HepG2 (cell line): ENCODE measurements at regions of chr1 and their contacts with region 1.

Region 1: GRCh38 chr1:178335426-178335825 is 161.3 kb downstream of the CLEC20A start:
- DNase-seq: no peak
- ATAC-seq: no peak
- H3K4me3 ChIP-seq: no peak overlapping the region
- H3K27ac ChIP-seq: no peak overlapping the region
- H3K4me1 ChIP-seq: no peaks in the 10 kb centered on the region
- H3K27me3 ChIP-seq: no peaks in the 10 kb centered on the region
- CTCF ChIP-seq: no peak
- EP300 ChIP-seq: no peak
- POLR2A ChIP-seq: no peak
- RAD21 ChIP-seq: no peak

Region 2: GRCh38 chr1:178349801-178350200 is 14.4 kb after region 1 on chr1:
- CTCF ChIA-PET with region 1: no interaction called
- POLR2A ChIA-PET with region 1: no interaction called
- in situ Hi-C with region 1: no loop called
- intact Hi-C with region 1: loop called (anchors 2 kb)
- DNase-seq: no peak
- ATAC-seq: no peak
- H3K4me3 ChIP-seq: no peak overlapping the region
- H3K27ac ChIP-seq: no peak overlapping the region
- H3K4me1 ChIP-seq: peaks cover 38% of the 10 kb centered on the region
- H3K27me3 ChIP-seq: no peaks in the 10 kb centered on the region
- CTCF ChIP-seq: no peak
- EP300 ChIP-seq: no peak
- POLR2A ChIP-seq: no peak
- RAD21 ChIP-seq: no peak